Adrenal gland (tissue), 19 donors: ENCODE measurements at regions of chr1 and their contacts with region 1.

Region 1: DNA sequence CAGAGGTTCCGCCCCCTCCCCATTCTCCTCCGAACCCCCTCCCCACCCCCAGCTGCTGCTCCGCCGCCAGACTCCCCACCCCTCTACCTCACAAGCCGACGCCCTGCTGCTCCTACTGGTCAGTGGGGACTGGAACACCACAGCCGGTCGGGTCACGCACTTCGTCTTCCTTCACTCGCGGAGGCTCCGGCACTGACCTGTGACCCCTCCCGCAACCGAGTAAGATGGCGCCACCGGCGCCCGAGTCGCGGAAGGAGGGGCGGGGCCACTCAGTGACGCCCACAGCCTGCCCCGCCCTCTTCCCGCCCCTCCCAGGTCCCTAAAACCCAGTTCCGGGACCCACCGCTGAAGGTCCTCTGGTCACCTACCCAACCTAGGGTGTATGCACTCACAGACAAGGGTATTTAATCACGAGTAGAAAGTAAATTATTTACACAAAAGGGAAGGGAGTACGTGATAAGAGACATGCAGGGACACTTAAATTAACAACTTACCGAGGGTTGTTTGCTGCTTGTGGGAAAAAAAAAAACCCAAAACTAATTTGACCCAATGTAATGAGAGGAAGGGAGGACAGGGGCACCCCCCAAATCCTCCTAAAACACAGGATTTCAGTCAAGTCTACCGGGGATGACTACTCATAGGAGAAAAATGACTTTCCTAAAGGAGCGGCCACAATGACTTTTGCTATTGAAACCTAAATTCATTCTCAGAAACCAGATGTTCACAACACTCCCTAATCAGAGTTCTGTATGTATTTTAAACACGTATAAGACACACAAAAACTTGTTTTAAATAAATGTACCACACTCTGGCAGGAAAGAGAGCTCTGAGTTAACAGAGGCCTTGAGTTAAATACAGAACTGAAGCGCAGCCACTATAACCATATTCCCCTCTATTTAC is at the start of gene RIT1:
- DNase-seq: peak; percentile 85 to 92 (median 88)
- H3K4me3 ChIP-seq: peak within 1 kb of the TSS; percentile 21 to 78 (median 62)
- H3K27ac ChIP-seq: peak within 1 kb of the TSS in 4 of 5 donors; percentile 73 to 90 (median 82)
- H3K4me1 ChIP-seq: peaks cover 6 to 11% of the 10 kb centered on the region in 2 donors
- H3K27me3 ChIP-seq: no peaks in the 10 kb centered on the region
- CTCF ChIP-seq: peak in 4 of 6 experiments; percentile 18 to 38 (median 26)
- POLR2A ChIP-seq: peak; percentile 23 to 42
- total RNA-seq, gene RIT1: 19.4 to 54.0 (median 31.4) TPM

Region 2: GRCh38 chr1:155117617-155118016 is 793.8 kb before region 1 on chr1:
- intact Hi-C with region 1: no loop called
- DNase-seq: no peak
- H3K4me3 ChIP-seq: no peak overlapping the region
- H3K27ac ChIP-seq: no peak overlapping the region
- H3K4me1 ChIP-seq: no peaks in the 10 kb centered on the region
- H3K27me3 ChIP-seq: no peaks in the 10 kb centered on the region
- CTCF ChIP-seq: no peak
- POLR2A ChIP-seq: no peak

Region 3: DNA sequence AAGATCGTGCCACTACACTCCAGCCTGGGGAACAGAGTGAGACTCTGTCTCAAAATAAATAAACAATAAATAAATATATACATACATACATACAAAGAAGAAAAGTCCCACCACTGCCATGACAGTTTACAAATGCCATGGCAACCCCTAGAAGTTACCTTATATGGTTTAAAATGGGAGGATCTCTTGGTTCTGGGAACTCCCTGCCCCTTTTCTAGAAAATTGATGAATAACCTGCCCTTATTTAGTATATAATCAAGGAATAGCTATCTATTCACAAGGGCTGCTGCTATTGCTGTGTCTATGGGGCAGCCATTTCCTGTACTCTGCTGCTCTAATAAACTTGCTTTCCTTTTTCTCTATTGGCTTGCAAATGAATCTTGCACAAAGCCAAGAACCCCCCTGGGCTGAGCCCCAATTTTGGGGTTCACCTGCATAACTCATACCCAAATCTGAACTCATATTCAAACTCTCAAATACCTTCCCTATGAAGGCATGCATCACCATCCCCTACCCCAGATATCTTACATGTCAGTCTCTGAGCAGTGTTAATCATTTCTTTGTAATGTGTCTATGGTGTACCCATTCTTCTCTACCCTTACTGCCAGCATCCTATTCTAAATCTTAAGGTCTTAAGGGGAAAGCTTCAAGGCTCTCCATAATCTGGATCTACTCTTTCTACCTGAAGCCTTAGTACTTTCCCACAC is 63.4 kb before region 1 on chr1:
- intact Hi-C with region 1: loop called in 1 of 2 experiments (anchors 10 kb)
- DNase-seq: peak in 1 of 7 donors; percentile 2
- H3K4me3 ChIP-seq: no peak overlapping the region
- H3K27ac ChIP-seq: no peak overlapping the region
- H3K4me1 ChIP-seq: peaks cover 0 to 5% of the 10 kb centered on the region in 2 donors
- H3K27me3 ChIP-seq: no peaks in the 10 kb centered on the region
- CTCF ChIP-seq: no peak
- POLR2A ChIP-seq: no peak

Region 4: DNA sequence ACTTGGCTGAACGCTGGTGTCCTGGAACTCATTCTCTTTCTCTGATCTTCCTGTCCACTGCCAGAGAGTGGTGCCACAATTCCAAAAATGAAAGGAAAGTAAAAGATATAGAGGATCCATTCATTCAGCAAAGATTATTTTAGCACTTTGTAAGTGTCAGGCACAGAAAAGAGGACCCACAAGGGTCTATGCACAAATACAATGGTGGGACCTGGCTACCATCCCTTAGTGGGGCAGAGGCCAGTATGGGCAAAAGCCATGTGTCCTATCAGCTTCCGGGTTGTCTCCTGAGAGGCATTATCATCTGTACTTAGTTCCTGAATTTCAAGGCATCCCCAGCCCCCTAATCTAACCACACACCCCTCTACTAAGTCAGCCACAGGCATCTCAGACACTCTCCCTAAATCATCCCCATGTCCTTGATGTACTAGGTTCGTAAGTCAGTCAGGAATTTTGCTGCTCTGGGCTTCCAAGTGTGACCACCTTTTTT is 90.3 kb after region 1 on chr1:
- intact Hi-C with region 1: no loop called
- DNase-seq: no peak
- H3K4me3 ChIP-seq: no peak overlapping the region
- H3K27ac ChIP-seq: peak overlapping the region in 1 of 5 donors; percentile 5
- H3K4me1 ChIP-seq: peaks cover 0 to 14% of the 10 kb centered on the region in 2 donors
- H3K27me3 ChIP-seq: no peaks in the 10 kb centered on the region
- CTCF ChIP-seq: peak in 1 of 6 experiments; percentile 14
- POLR2A ChIP-seq: no peak